Naive thymus-derived CD4-positive, alpha-beta T cell (primary cell): ENCODE measurements at regions of chr9 and their contacts with region 1.

Region 1: DNA sequence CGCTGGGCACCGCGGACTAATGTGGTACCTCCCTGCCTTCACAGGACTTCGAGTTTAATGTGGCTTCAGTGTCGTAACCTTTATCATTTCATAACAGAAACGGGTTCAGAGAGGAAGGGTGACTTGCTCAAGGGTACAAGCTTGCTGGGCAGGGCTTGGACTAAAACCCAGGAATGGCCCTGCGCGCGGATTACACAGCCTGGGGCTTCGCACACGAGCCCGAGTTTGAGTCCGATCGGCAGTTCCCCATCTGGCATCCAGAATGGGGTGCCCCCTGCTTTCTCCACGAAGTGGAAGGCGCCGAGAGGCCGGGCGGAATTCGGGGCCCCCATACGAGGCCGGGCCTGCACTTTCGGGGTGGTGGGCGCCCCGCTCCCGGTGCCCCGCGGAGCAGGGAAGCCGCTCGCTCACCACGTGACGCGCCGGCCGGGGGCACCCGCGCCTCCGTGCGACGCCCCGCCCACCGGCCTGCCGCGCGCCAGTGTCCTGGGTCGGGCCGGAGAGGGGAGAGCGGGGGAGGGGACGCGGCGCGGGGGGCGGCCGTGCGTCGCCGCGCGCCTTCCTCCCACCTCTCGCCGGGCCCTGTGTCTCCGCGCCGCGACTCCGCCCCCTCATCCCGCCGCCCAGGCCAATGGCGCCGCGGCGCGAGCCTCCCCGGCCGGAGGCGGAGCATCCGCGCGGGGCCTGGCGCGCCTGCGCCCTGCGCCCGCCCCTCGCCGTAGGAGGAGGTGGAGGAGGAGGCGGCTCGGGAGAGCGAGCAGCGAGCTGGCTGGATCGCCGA is at the start of gene SET:
- DNase-seq: peak; percentile 86 to 97 (median 93)
- ATAC-seq: peak; percentile 89
- H3K4me3 ChIP-seq: peak within 1 kb of the TSS; percentile 84
- H3K4me3 Mint-ChIP-seq: peak within 1 kb of the TSS; percentile 86 to 99 (median 90)
- H3K27ac ChIP-seq: peak within 1 kb of the TSS; percentile 85
- H3K27ac Mint-ChIP-seq: peak within 1 kb of the TSS; percentile 87 to 99 (median 97)
- H3K4me1 ChIP-seq: peaks cover 22 to 48% of the 10 kb centered on the region in 2 donors
- H3K4me1 Mint-ChIP-seq: peaks cover 45 to 67% (median 59%) of the 10 kb centered on the region in 7 donors
- H3K27me3 ChIP-seq: no peaks in the 10 kb centered on the region
- H3K27me3 Mint-ChIP-seq: no peaks in the 10 kb centered on the region
- total RNA-seq, gene SET: 222 to 488 (median 270) TPM

Region 2: GRCh38 chr9:128656416-128657343 is 32.0 kb before region 1 on chr9 and contains the start of gene DYNC2I2:
- CTCF ChIA-PET with region 1: interaction called, 4 read pairs
- POLR2A ChIA-PET with region 1: interaction called, 32 read pairs
- intact Hi-C with region 1: loop called (anchors 1 kb)
- DNase-seq: peak; percentile 91 to 96 (median 96)
- ATAC-seq: peak; percentile 98
- H3K4me3 ChIP-seq: peak within 1 kb of the TSS; percentile 96
- H3K4me3 Mint-ChIP-seq: peak within 1 kb of the TSS; percentile 88 to 98 (median 94)
- H3K27ac ChIP-seq: peak within 1 kb of the TSS; percentile 99
- H3K27ac Mint-ChIP-seq: peak within 1 kb of the TSS; percentile 95 to 100 (median 99)
- H3K4me1 ChIP-seq: peaks cover 3 to 9% of the 10 kb centered on the region in 2 donors
- H3K4me1 Mint-ChIP-seq: peaks cover 0 to 14% (median 7%) of the 10 kb centered on the region in 7 donors
- H3K27me3 ChIP-seq: no peaks in the 10 kb centered on the region
- H3K27me3 Mint-ChIP-seq: no peaks in the 10 kb centered on the region
- total RNA-seq, gene DYNC2I2: 2.5 to 41.7 (median 3.8) TPM

Region 3: GRCh38 chr9:128723866-128724743 is 35.4 kb after region 1 on chr9 and contains the start of gene ZDHHC12:
- CTCF ChIA-PET with region 1: no interaction called
- POLR2A ChIA-PET with region 1: interaction called, 17 read pairs
- intact Hi-C with region 1: loop called (anchors 1 kb)
- DNase-seq: peak; percentile 96 to 99 (median 99)
- ATAC-seq: peak; percentile 97
- H3K4me3 ChIP-seq: peak within 1 kb of the TSS; percentile 97
- H3K4me3 Mint-ChIP-seq: peak within 1 kb of the TSS; percentile 85 to 97 (median 94)
- H3K27ac ChIP-seq: peak within 1 kb of the TSS; percentile 89
- H3K27ac Mint-ChIP-seq: peak within 1 kb of the TSS; percentile 85 to 96 (median 94)
- H3K4me1 ChIP-seq: peaks cover 13 to 29% of the 10 kb centered on the region in 2 donors
- H3K4me1 Mint-ChIP-seq: peaks cover 23 to 46% (median 39%) of the 10 kb centered on the region in 7 donors
- H3K27me3 ChIP-seq: no peaks in the 10 kb centered on the region
- H3K27me3 Mint-ChIP-seq: no peaks in the 10 kb centered on the region
- total RNA-seq, gene ZDHHC12: 21.2 to 70.3 (median 25.7) TPM

Region 4: DNA sequence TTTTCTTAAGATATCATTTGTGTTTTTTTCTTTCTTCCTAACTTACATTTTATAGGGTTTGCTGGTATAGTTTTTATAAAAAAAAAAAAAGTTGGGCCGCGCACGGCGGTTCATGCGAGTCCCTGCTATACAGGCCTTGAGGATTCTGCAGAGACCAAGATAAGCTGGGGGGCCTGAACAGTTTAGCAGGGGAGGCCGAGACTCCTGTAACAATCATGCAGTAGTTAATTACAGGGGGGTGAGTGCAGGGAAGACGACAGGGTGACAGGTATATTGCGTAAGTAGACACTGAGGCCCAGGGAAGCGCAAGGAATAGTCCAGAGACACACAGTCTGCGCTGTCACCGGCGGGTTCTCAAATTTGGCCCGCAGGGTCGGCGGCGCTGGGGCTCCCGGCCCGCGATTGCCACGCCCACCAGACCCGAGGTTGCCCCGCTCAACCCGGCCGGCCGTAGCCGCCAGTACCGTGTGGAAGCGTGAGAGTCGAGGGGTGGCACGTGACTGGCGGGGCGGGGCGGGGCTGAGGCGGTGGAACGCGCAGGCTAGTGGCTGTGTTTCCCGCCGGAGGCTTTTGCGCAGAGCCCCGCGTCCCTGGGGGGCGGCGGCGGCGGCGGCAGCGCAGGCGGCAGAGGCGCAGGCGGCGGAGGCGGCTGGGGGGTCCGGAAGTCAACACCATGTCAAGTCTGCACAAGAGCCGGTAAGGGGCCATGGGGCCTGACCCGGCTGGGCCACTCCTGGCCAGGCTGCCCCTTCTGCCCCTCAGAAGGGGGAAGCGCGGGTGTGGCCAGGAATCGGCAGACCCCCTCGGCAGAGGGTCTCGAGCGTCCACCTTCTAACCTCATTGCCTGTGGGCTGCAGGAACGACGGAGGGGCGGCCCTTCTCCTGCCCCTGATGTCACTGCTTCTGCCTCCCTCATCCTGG is 98.2 kb after region 1 on chr9 and contains the start of gene TBC1D13:
- CTCF ChIA-PET with region 1: no interaction called
- POLR2A ChIA-PET with region 1: interaction called, 5 read pairs
- intact Hi-C with region 1: loop called in 1 of 2 experiments (anchors 1 kb)
- DNase-seq: peak; percentile 88 to 93 (median 92)
- ATAC-seq: peak; percentile 99
- H3K4me3 ChIP-seq: peak within 1 kb of the TSS; percentile 90
- H3K4me3 Mint-ChIP-seq: peak within 1 kb of the TSS; percentile 80 to 98 (median 92)
- H3K27ac ChIP-seq: peak within 1 kb of the TSS; percentile 82
- H3K27ac Mint-ChIP-seq: peak within 1 kb of the TSS; percentile 87 to 98 (median 95)
- H3K4me1 ChIP-seq: peaks cover 13% of the 10 kb centered on the region in 2 donors
- H3K4me1 Mint-ChIP-seq: peaks cover 6 to 29% (median 23%) of the 10 kb centered on the region in 7 donors
- H3K27me3 ChIP-seq: no peaks in the 10 kb centered on the region
- H3K27me3 Mint-ChIP-seq: no peaks in the 10 kb centered on the region
- total RNA-seq, gene TBC1D13: 21.0 to 35.2 (median 24.9) TPM

Region 5: DNA sequence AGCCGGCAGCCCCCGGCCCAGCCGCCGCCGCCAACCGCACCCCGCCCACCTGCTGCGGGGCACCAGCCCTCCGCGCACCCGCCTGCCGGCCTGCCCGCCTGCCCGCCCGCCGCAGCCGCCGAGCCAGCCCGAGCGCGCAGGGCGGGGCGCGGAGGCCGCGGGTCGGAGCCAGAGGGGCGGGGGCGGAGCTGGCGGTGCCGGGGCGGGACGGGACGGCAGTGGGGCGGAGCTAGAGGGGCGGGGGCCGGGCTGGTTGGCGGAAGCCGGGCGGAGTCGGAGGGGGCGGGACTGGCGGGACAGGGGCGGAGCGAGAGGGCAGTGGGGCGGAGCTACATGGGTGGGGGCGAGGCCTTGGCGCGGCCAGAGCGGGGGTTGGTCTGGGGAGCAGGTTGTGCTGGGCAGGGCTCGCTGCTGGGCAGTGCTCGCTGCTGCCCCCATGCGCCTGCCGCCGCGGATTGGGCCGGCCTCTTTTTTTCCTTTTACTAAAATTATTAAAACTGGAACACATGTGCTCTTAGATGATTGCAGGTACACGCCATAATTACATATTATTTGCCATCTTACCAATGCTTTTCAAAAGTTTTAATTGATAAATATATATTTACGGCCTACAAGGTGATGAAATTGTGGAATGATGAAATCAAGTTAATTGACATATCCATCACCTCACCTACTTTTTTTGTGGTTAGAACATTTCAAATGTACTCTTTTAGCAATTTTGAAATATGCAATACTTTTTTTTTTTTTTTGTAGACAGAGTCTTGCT is 339.7 kb after region 1 on chr9 and contains the start of gene SH3GLB2:
- CTCF ChIA-PET with region 1: no interaction called
- POLR2A ChIA-PET with region 1: no interaction called
- intact Hi-C with region 1: loop called in 1 of 2 experiments (anchors 1 kb)
- DNase-seq: peak in 8 of 9 donors; percentile 81 to 97 (median 88)
- ATAC-seq: peak; percentile 94
- H3K4me3 ChIP-seq: peak within 1 kb of the TSS; percentile 76
- H3K4me3 Mint-ChIP-seq: peak within 1 kb of the TSS; percentile 81 to 92 (median 83)
- H3K27ac ChIP-seq: peak within 1 kb of the TSS; percentile 72
- H3K27ac Mint-ChIP-seq: peak within 1 kb of the TSS; percentile 62 to 90 (median 78)
- H3K4me1 ChIP-seq: peaks cover 13 to 18% of the 10 kb centered on the region in 2 donors
- H3K4me1 Mint-ChIP-seq: peaks cover 13 to 37% (median 25%) of the 10 kb centered on the region in 7 donors
- H3K27me3 ChIP-seq: no peaks in the 10 kb centered on the region
- H3K27me3 Mint-ChIP-seq: no peaks in the 10 kb centered on the region
- total RNA-seq, gene SH3GLB2: 76.3 to 106 (median 86.2) TPM